Calu3 (cell line): ENCODE measurements at regions of chr6 and their contacts with region 1.

Region 1: GRCh38 chr6:48765352-48765961 is 654.5 kb upstream of the PTCHD4 start:
- DNase-seq: peak; percentile 47
- H3K4me3 Mint-ChIP-seq: no peak overlapping the region
- H3K27ac Mint-ChIP-seq: peak overlapping the region; percentile 54
- H3K4me1 Mint-ChIP-seq: peaks cover 18% of the 10 kb centered on the region
- H3K27me3 Mint-ChIP-seq: no peaks in the 10 kb centered on the region
- CTCF ChIP-seq: peak; percentile 46

Region 2: GRCh38 chr6:48087448-48087847 is 678.0 kb before region 1 on chr6:
- CTCF ChIA-PET with region 1: interaction called, 13 read pairs
- intact Hi-C with region 1: loop called (anchors 1 kb)
- DNase-seq: no peak
- H3K4me3 Mint-ChIP-seq: no peak overlapping the region
- H3K27ac Mint-ChIP-seq: no peak overlapping the region
- H3K4me1 Mint-ChIP-seq: no peaks in the 10 kb centered on the region
- H3K27me3 Mint-ChIP-seq: no peaks in the 10 kb centered on the region
- CTCF ChIP-seq: no peak

Region 3: GRCh38 chr6:48280035-48280620 is 485.3 kb before region 1 on chr6:
- CTCF ChIA-PET with region 1: no interaction called
- intact Hi-C with region 1: no loop called
- DNase-seq: no peak
- H3K4me3 Mint-ChIP-seq: no peak overlapping the region
- H3K27ac Mint-ChIP-seq: no peak overlapping the region
- H3K4me1 Mint-ChIP-seq: no peaks in the 10 kb centered on the region
- H3K27me3 Mint-ChIP-seq: no peaks in the 10 kb centered on the region
- CTCF ChIP-seq: no peak

Region 4: DNA sequence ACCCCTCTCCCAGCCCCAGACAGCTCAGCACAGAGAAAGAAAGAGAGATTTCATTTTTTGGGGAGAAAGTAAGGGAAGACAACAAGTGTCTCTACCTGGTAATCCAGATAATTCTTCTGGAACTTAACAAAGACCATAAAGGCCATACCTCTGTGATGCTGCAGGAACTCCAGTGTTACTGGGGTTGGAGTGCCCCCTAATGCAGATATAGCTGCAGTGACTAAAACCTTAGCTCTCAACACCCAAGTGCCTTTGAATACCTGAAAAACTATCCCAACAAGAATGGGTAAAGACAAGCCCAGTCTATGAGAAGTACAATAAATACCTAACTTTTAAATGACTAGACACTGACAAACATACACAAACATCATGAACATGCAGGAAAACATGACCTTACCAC is 289.2 kb before region 1 on chr6:
- CTCF ChIA-PET with region 1: no interaction called
- intact Hi-C with region 1: loop called (anchors 5 kb)
- DNase-seq: peak; percentile 10
- H3K4me3 Mint-ChIP-seq: no peak overlapping the region
- H3K27ac Mint-ChIP-seq: no peak overlapping the region
- H3K4me1 Mint-ChIP-seq: no peaks in the 10 kb centered on the region
- H3K27me3 Mint-ChIP-seq: no peaks in the 10 kb centered on the region
- CTCF ChIP-seq: no peak

Region 5: DNA sequence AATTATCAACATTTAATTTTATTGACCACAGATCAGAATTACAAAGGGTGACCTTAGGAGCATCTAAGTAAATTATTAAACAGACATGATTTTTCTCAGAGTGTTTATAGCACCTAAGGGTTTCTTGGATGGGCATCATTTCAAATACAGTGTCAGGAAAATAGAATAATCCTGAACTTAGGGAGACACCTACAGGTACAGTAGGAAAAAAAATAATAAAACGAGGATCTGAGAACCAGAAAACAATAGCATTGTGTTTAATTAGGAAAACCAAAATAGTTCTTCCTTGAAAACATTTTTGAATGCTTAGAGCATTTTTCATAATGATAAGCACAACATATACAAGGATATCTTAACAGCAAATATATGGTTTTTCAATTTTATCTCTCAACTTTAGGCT is 658.4 kb after region 1 on chr6:
- CTCF ChIA-PET with region 1: no interaction called
- intact Hi-C with region 1: loop called (anchors 5 kb)
- DNase-seq: no peak
- H3K4me3 Mint-ChIP-seq: no peak overlapping the region
- H3K27ac Mint-ChIP-seq: no peak overlapping the region
- H3K4me1 Mint-ChIP-seq: no peaks in the 10 kb centered on the region
- H3K27me3 Mint-ChIP-seq: no peaks in the 10 kb centered on the region
- CTCF ChIP-seq: peak; percentile 34